ENCODE measurements at regions of chr15 and their contacts with region 1.

Region 1: DNA sequence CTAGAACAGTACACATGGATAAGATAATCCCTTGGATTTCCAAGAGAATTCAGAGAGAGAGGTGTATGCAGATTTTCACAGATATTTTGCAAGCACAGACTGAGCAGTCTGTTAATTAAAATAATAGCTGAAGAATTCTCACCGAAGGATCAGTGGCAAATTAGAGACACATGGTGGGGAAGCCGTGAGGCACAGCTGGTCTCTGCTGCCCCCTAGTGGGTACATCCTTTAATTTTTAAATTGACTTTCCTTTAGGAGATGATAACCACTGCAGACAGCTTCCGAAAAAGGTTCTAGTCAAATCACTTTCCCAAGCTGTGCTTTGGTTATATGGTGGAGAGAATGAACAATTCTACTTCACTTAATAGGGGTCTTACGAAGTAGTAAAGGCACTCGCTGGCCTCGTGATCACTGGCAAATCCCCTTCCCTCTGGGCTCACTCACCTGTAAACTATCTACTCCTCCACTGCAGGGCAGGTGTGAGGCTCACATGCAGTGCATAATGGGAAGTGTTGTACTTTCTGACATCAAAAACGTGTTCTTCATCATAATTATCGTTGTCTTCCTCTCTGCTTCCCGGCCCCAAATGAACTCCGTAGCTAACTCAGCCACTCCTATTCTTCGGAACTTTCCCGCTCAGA is 19.5 kb downstream of the MESD start:
- DNase-seq: peak; percentile 75
- ATAC-seq: no peak
- H3K4me3 ChIP-seq: no peak overlapping the region
- H3K4me3 Mint-ChIP-seq: no peak overlapping the region
- H3K27ac ChIP-seq: no peak overlapping the region
- H3K27ac Mint-ChIP-seq: peak overlapping the region; percentile 26
- H3K4me1 ChIP-seq: no peaks in the 10 kb centered on the region
- H3K4me1 Mint-ChIP-seq: peaks cover 7% of the 10 kb centered on the region
- H3K27me3 ChIP-seq: no peaks in the 10 kb centered on the region
- H3K27me3 Mint-ChIP-seq: no peaks in the 10 kb centered on the region
- CTCF ChIP-seq: peak; percentile 95

Region 2: GRCh38 chr15:80455668-80456442 is 514.3 kb before region 1 on chr15:
- CTCF ChIA-PET with region 1: interaction called, 102 read pairs
- POLR2A ChIA-PET with region 1: no interaction called
- intact Hi-C with region 1: no loop called
- DNase-seq: peak; percentile 69
- ATAC-seq: peak; percentile 49
- H3K4me3 ChIP-seq: no peak overlapping the region
- H3K4me3 Mint-ChIP-seq: no peak overlapping the region
- H3K27ac ChIP-seq: no peak overlapping the region
- H3K27ac Mint-ChIP-seq: no peak overlapping the region
- H3K4me1 ChIP-seq: peaks cover 0 to 4% of the 10 kb centered on the region in 2 donors
- H3K4me1 Mint-ChIP-seq: peaks cover 4% of the 10 kb centered on the region
- H3K27me3 ChIP-seq: peaks cover 0 to 8% (median 4%) of the 10 kb centered on the region in 4 experiments
- H3K27me3 Mint-ChIP-seq: peaks cover 11% of the 10 kb centered on the region
- CTCF ChIP-seq: peak; percentile 98

Region 3: DNA sequence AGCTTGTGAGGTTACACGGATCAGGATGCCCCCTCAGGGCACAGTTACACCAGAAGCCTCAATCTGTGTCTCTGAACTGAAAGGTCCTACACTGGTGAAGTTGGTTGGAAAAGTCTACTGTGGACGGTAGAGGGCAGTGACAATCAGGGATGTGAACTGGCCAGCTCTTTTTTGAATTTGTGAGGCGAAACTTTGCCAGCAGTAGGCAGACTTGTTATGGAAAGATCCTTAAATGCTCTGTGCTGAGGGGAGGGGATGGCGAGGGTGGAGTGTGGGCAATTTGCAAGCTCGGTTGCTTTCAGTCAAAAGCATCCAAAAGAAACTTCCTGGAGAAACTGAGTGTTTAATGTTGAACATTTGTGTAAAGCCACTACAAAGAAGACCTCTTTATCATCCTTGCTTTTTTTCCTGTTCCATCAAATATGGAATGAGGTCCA is 402.4 kb before region 1 on chr15:
- CTCF ChIA-PET with region 1: interaction called, 22 read pairs
- POLR2A ChIA-PET with region 1: no interaction called
- intact Hi-C with region 1: no loop called
- DNase-seq: peak; percentile 18
- ATAC-seq: no peak
- H3K4me3 ChIP-seq: no peak overlapping the region
- H3K4me3 Mint-ChIP-seq: no peak overlapping the region
- H3K27ac ChIP-seq: no peak overlapping the region
- H3K27ac Mint-ChIP-seq: no peak overlapping the region
- H3K4me1 ChIP-seq: no peaks in the 10 kb centered on the region
- H3K4me1 Mint-ChIP-seq: no peaks in the 10 kb centered on the region
- H3K27me3 ChIP-seq: peaks cover 0 to 3% (median 0%) of the 10 kb centered on the region in 4 experiments
- H3K27me3 Mint-ChIP-seq: peaks cover 43% of the 10 kb centered on the region
- CTCF ChIP-seq: peak; percentile 15

Region 4: GRCh38 chr15:80945605-80946004 is 24.5 kb before region 1 on chr15:
- CTCF ChIA-PET with region 1: interaction called, 12 read pairs
- POLR2A ChIA-PET with region 1: no interaction called
- intact Hi-C with region 1: no loop called
- DNase-seq: peak; percentile 41
- ATAC-seq: peak; percentile 53
- H3K4me3 ChIP-seq: no peak overlapping the region
- H3K4me3 Mint-ChIP-seq: no peak overlapping the region
- H3K27ac ChIP-seq: no peak overlapping the region
- H3K27ac Mint-ChIP-seq: no peak overlapping the region
- H3K4me1 ChIP-seq: peaks cover 9 to 13% of the 10 kb centered on the region in 2 donors
- H3K4me1 Mint-ChIP-seq: peaks cover 13% of the 10 kb centered on the region
- H3K27me3 ChIP-seq: no peaks in the 10 kb centered on the region
- H3K27me3 Mint-ChIP-seq: no peaks in the 10 kb centered on the region
- CTCF ChIP-seq: no peak

Region 5: DNA sequence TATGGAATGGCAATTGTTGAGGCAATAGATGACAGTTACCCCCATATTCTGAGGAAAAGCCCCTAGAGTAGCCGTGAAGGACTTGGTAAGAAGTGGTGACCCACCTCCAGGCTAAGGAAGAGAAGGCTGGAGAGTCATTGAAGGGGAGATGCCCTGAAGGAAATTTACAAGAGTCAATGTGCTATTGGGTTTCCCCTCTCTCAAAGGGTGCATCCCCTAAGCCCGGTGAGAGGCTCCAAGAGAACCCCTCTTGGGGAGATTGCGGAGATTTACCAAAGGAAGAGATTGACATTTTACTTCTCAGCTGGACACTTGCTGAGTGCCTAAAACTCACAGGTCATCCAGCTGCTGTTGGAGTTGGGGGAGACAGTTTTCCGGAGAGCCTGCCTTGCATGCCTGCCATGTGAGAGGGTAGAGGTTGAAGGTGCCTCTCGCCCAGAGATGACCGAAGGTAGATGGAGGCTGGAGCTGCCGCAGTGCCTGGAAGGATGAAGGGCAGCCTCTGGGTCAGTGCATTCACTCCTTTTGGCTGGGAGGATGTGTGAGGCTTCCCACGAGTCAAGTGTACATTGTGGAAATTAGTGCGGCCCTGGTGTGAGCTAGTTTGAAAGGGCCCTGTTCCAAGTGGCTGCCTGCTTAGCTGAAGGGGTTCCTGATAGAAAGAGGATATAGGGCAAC is 11.2 kb before region 1 on chr15:
- CTCF ChIA-PET with region 1: interaction called, 20 read pairs
- POLR2A ChIA-PET with region 1: no interaction called
- intact Hi-C with region 1: no loop called
- DNase-seq: no peak
- ATAC-seq: no peak
- H3K4me3 ChIP-seq: no peak overlapping the region
- H3K4me3 Mint-ChIP-seq: no peak overlapping the region
- H3K27ac ChIP-seq: no peak overlapping the region
- H3K27ac Mint-ChIP-seq: no peak overlapping the region
- H3K4me1 ChIP-seq: no peaks in the 10 kb centered on the region
- H3K4me1 Mint-ChIP-seq: no peaks in the 10 kb centered on the region
- H3K27me3 ChIP-seq: no peaks in the 10 kb centered on the region
- H3K27me3 Mint-ChIP-seq: no peaks in the 10 kb centered on the region
- CTCF ChIP-seq: no peak

Region 6: DNA sequence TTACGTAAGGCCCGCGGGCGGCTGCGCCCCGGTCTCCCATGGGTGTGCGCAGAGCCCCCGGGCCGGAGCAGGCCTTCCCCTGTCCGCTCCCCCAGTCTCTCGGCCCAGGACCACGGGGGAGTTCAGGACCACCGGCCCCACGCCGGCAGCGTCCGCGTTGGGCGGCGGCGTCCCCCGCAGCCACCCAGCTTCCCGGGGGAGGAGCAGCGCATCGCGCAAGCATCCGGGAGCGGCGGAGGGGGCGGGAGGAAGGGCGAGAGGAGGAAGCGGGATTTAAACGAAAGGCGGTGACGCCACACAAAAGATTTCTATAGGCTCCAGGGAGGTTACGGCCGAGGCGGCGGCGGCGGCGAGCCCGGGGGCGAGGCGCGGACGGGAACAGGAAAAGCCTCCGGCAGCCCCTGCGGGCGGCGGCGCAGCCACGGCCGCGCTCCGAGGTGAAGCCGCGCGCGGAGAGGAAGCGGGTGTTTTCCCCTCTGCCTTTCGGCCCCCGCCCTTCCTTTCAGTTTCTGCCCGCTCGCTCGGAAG is 30.6 kb after region 1 on chr15 and contains the start of gene TLNRD1:
- CTCF ChIA-PET with region 1: interaction called, 4 read pairs
- POLR2A ChIA-PET with region 1: interaction called, 3 read pairs
- intact Hi-C with region 1: loop called (anchors 1 kb)
- DNase-seq: peak; percentile 93
- ATAC-seq: peak; percentile 66
- H3K4me3 ChIP-seq: peak within 1 kb of the TSS; percentile 70 to 94 (median 77)
- H3K4me3 Mint-ChIP-seq: peak within 1 kb of the TSS; percentile 98
- H3K27ac ChIP-seq: peak within 1 kb of the TSS; percentile 81 to 94
- H3K27ac Mint-ChIP-seq: peak within 1 kb of the TSS; percentile 99
- H3K4me1 ChIP-seq: peaks cover 36 to 39% of the 10 kb centered on the region in 2 donors
- H3K4me1 Mint-ChIP-seq: peaks cover 44% of the 10 kb centered on the region
- H3K27me3 ChIP-seq: no peaks in the 10 kb centered on the region
- H3K27me3 Mint-ChIP-seq: no peaks in the 10 kb centered on the region
- CTCF ChIP-seq: no peak
- total RNA-seq, gene TLNRD1: 26.5 and 26.7 TPM in 2 replicates

Measured in B cell (primary cell).